Pancreas (tissue), 10 donors: ENCODE measurements at regions of chr4 and their contacts with region 1.

Region 1: GRCh38 chr4:118865091-118865708 is 23.5 kb upstream of the SYNPO2 start:
- DNase-seq: peak in 4 of 6 donors; percentile 33 to 65 (median 56)
- ATAC-seq: peak; percentile 95 to 100 (median 100)
- H3K4me3 ChIP-seq: no peak overlapping the region
- H3K27ac ChIP-seq: no peak overlapping the region
- H3K4me1 ChIP-seq: no peaks in the 10 kb centered on the region
- H3K27me3 ChIP-seq: no peaks in the 10 kb centered on the region
- CTCF ChIP-seq: peak; percentile 13 to 59 (median 46)

Region 2: DNA sequence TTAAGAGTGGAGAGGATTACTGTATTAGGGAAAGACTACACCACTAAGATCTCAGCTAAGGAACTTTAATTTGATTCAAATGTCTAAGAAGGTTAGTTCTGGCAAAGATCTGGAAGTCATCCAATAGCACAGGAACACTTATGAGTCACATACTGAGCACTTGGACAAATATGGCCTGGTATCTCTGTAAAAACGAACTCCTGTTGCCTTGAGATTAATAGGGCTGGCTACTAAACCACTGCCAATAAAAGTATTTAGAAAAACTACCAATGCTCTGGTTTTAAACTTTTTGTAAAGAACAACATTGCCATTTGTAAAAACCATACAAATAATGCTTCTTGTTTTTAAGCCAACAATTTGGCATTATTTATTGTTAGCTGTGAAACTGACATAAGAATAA is 99.8 kb before region 1 on chr4:
- intact Hi-C with region 1: loop called in 2 of 3 experiments (anchors 10 kb)
- DNase-seq: no peak
- ATAC-seq: peak; percentile 87 to 92 (median 90)
- H3K4me3 ChIP-seq: no peak overlapping the region
- H3K27ac ChIP-seq: peak overlapping the region in 1 of 4 donors; percentile 7
- H3K4me1 ChIP-seq: peaks cover 0 to 22% (median 17%) of the 10 kb centered on the region in 3 donors
- H3K27me3 ChIP-seq: no peaks in the 10 kb centered on the region
- CTCF ChIP-seq: no peak

Region 3: DNA sequence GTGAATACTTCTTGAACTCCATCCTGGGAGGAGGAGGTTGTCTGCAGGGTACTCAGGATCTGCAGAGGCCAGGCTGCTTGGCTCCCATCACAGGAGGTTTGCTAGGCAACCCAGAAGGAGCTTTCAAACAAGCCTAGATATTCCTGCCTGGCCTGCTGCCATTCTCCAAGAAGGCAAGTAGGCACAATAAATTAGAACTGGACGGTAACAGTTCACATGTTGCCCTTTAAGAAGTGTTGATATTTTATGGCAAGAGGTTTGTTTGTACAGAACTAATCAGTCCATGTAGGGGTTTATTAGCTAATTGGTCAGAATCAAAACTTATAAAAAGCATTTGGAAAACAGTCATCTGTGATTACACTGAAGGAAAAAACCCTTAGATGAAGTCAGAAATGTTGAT is 62.8 kb after region 1 on chr4:
- intact Hi-C with region 1: no loop called
- DNase-seq: peak in 1 of 6 donors; percentile 9
- ATAC-seq: peak in 2 of 4 donors; percentile 69 to 76
- H3K4me3 ChIP-seq: no peak overlapping the region
- H3K27ac ChIP-seq: no peak overlapping the region
- H3K4me1 ChIP-seq: no peaks in the 10 kb centered on the region
- H3K27me3 ChIP-seq: no peaks in the 10 kb centered on the region
- CTCF ChIP-seq: no peak

Region 4: GRCh38 chr4:118964891-118965411 is 99.8 kb after region 1 on chr4:
- intact Hi-C with region 1: no loop called
- DNase-seq: no peak
- ATAC-seq: peak in 1 of 4 donors; percentile 15
- H3K4me3 ChIP-seq: no peak overlapping the region
- H3K27ac ChIP-seq: no peak overlapping the region
- H3K4me1 ChIP-seq: peaks cover 0 to 13% (median 11%) of the 10 kb centered on the region in 3 donors
- H3K27me3 ChIP-seq: no peaks in the 10 kb centered on the region
- CTCF ChIP-seq: no peak

Region 5: GRCh38 chr4:119191505-119191904 is 326.3 kb after region 1 on chr4:
- intact Hi-C with region 1: no loop called
- DNase-seq: no peak
- ATAC-seq: no peak
- H3K4me3 ChIP-seq: no peak overlapping the region
- H3K27ac ChIP-seq: no peak overlapping the region
- H3K4me1 ChIP-seq: peaks cover 4 to 17% (median 15%) of the 10 kb centered on the region in 3 donors
- H3K27me3 ChIP-seq: no peaks in the 10 kb centered on the region
- CTCF ChIP-seq: no peak